Sigmoid colon (tissue), 7 donors: ENCODE measurements at regions of chr4 and their contacts with region 1.

Region 1: DNA sequence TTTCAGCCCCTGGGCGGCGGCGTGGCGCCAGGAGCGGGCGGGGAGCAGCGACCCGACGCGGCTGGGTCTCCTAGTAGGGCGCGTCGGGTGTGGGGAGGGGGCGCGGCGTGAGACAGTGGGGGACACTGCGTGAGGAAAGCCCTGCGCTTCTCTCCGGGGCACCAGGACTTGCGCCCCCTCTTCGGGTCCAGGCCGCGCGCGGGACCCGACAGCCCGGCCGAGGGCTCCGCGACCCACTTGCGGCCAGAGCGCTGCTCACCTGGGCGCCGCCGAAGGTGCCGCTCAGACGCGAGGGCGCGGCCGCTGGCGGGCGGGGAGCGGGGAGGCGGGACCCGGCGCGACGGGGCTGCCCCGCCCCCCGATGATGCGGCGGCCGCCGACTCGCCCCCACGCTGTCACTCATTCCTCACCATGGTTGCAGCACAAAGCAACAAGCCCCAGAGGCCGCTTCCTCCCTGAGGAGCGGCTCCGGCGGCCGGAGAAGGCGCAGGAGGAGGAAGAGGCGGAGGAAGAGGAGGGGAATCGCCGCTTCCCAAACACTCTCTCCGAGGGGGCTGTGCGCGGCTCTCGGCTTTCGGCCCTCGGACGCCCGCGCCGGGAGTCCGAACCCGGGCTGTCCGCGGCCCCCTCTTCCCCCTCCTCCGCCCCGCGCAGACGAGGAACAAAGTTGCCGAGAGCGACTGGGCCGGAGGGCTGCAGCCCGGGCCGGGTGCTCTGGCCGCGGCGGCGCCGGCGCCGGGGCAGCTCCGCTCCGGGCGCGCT is at the start of gene RAPGEF2:
- DNase-seq: peak; percentile 96
- H3K4me3 ChIP-seq: peak within 1 kb of the TSS; percentile 84 to 98 (median 95)
- H3K27ac ChIP-seq: peak within 1 kb of the TSS; percentile 97 to 98 (median 98)
- H3K4me1 ChIP-seq: peaks cover 0 to 37% (median 32%) of the 10 kb centered on the region in 4 donors
- H3K27me3 ChIP-seq: no peaks in the 10 kb centered on the region
- CTCF ChIP-seq: no peak
- EP300 ChIP-seq: peak in 1 of 4 donors; percentile 10
- POLR2A ChIP-seq: peak; percentile 76 to 92
- total RNA-seq, gene RAPGEF2: 34.2 to 63.1 (median 55.9) TPM

Region 2: GRCh38 chr4:158856852-158857251 is 246.0 kb before region 1 on chr4:
- intact Hi-C with region 1: loop called (anchors 5 kb)
- DNase-seq: no peak
- H3K4me3 ChIP-seq: no peak overlapping the region
- H3K27ac ChIP-seq: no peak overlapping the region
- H3K4me1 ChIP-seq: peaks cover 0 to 9% (median 6%) of the 10 kb centered on the region in 4 donors
- H3K27me3 ChIP-seq: no peaks in the 10 kb centered on the region
- CTCF ChIP-seq: peak in 3 of 4 experiments; percentile 49 to 54 (median 54)
- EP300 ChIP-seq: no peak
- POLR2A ChIP-seq: no peak

Region 3: DNA sequence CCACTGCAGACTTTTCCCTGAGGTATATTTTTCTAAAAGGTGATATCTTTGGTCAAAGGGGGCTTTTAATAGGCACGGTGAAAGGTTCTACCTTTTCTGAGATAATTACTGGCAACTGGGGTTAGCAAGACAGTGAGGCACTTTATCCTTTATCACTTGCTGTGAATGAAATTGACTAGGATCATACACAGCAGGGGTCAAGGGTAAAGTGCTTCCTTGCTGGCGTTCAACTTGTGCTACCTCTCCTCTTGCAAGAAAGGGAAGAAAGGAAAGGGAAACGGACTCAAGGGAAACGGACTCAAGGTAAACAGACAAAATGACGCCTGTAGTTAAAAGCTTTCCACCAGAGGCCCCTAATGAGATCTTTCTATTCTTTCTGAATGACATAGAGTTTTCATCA is 78.5 kb before region 1 on chr4:
- intact Hi-C with region 1: loop called (anchors 5 kb)
- DNase-seq: no peak
- H3K4me3 ChIP-seq: no peak overlapping the region
- H3K27ac ChIP-seq: peak overlapping the region in 3 of 4 donors; percentile 57 to 78 (median 71)
- H3K4me1 ChIP-seq: peaks cover 0 to 39% (median 19%) of the 10 kb centered on the region in 4 donors
- H3K27me3 ChIP-seq: no peaks in the 10 kb centered on the region
- CTCF ChIP-seq: no peak
- EP300 ChIP-seq: no peak
- POLR2A ChIP-seq: no peak

Region 4: DNA sequence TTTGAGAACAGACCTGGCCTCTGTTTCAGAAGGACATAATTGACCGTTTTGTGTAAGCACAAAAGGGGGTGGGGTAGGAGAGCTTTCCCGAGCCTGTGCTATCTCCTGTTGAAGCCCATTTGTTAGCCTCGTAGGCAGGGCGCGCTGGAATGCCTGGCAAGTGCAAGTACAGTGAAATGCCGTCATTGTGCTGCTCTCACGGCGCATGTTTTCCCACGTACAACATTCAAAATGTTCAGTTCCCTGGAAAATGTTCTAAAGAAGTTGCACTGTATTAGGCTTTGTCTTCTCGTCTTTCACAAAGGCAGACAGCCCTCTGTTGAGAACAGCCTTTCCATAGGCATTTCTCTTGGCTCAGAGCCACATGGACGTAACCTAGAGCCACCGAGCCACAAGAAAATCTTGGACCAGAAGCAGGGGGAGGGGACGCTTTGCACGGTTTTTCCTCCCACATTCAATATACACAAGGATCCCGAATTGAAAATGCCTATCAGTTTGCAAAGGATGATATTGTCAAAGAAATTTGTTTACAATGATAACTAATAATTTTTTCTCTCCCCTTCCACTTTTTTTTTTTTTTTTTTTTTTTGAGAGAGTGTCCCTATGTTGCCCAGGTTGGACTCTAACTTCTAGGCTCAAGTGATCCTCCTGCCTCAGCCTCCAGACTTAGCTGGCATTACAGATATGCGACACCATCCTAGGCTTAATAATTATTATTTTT is 54.5 kb before region 1 on chr4:
- intact Hi-C with region 1: loop called (anchors 5 kb)
- DNase-seq: peak; percentile 85
- H3K4me3 ChIP-seq: peak overlapping the region; percentile 5 to 39 (median 34)
- H3K27ac ChIP-seq: peak overlapping the region; percentile 35 to 67 (median 58)
- H3K4me1 ChIP-seq: peaks cover 0 to 20% (median 2%) of the 10 kb centered on the region in 4 donors
- H3K27me3 ChIP-seq: no peaks in the 10 kb centered on the region
- CTCF ChIP-seq: no peak
- EP300 ChIP-seq: no peak
- POLR2A ChIP-seq: no peak

Region 5: GRCh38 chr4:159159611-159160010 is 56.8 kb after region 1 on chr4:
- intact Hi-C with region 1: loop called (anchors 5 kb)
- DNase-seq: no peak
- H3K4me3 ChIP-seq: no peak overlapping the region
- H3K27ac ChIP-seq: no peak overlapping the region
- H3K4me1 ChIP-seq: peaks cover 0 to 57% (median 28%) of the 10 kb centered on the region in 4 donors
- H3K27me3 ChIP-seq: no peaks in the 10 kb centered on the region
- CTCF ChIP-seq: no peak
- EP300 ChIP-seq: no peak
- POLR2A ChIP-seq: no peak

Region 6: DNA sequence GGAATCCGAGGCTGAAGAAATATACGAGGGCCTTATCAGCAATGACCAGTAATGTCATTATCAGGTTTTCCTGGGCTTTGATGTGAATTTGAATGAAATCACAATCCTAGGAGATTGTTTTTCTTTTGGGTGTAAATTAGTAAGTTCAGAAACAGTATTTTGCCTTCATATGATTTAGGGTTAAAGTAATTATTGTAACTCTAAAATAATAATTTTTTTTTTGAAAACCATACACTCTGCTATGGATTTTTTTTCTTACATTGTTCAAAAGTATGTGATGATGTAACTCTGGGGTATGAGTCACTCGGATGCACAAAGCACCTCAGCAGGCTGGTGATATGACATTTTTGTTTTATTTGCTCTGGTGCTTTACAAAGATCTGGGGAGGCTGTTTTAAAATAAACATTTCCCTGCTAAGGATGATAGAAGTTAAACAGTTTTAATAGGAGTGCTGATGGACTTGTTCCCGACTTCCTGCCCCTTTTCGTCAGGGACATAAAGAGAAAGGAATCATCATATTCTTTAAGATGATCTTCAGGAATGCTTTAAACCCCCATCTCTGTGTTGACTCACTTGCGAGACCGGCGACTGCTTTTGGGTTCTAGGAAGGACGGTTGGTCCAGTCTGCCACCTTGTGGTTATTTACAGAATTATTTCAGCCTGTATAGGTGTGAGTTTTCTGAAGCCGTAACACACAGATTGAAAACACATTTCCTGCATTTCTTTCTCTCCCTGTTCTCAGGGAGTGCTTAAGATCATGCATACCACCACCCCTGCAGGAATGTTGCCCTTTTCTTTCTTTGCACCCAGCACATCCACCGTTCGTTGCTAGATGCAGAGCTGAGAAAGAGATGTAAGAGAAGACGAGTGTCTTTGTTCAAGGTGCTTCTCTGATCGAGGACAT is 72.5 kb after region 1 on chr4:
- intact Hi-C with region 1: loop called (anchors 1 kb)
- DNase-seq: peak; percentile 80
- H3K4me3 ChIP-seq: peak overlapping the region in 2 of 4 donors; percentile 19 to 20
- H3K27ac ChIP-seq: peak overlapping the region; percentile 51 to 80 (median 59)
- H3K4me1 ChIP-seq: peaks cover 0 to 81% (median 65%) of the 10 kb centered on the region in 4 donors
- H3K27me3 ChIP-seq: no peaks in the 10 kb centered on the region
- CTCF ChIP-seq: peak; percentile 78 to 86 (median 85)
- EP300 ChIP-seq: peak in 1 of 4 donors; percentile 34
- POLR2A ChIP-seq: no peak